ENCODE measurements at regions of chr6 and their contacts with region 1.

Region 1: GRCh38 chr6:105402939-105403935 is at the start of gene PREP:
- DNase-seq: peak; percentile 95
- total RNA-seq, gene PREP: 26.2 TPM

Region 2: DNA sequence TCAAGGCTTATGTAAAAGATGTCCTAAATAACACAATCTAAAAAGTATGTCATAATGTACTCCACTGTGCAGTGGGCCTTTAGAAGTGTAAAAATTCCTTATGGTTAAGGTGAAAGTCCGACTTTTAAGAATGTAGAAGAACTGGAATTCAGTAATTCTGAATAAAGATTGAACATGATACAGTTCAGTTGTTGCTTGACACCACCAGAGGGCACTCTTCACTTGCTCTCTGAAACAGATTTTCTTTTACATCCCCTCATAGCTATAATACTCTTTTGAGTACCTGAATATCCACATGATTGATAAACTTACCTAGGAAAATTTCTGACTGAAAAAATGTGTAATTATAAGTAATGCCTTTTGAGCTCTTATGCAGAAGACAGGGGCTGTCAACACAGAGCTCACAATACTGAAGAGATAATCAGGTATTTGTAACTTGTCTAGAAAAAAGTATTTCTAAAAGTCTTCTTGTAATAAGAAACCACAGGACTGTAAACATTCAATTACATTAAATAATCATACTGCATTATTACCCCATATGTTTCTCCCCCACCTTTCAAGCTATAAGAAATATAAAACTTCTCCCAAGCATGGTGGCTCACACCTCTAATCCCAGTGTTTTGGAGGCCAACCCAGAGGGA is 315.5 kb before region 1 on chr6:
- intact Hi-C with region 1: loop called (anchors 5 kb)
- DNase-seq: no peak

Region 3: GRCh38 chr6:105136431-105137350 is 266.5 kb before region 1 on chr6:
- intact Hi-C with region 1: loop called (anchors 5 kb)
- DNase-seq: peak; percentile 81

Region 4: GRCh38 chr6:105179244-105180065 is 223.8 kb before region 1 on chr6 and contains the start of gene POPDC3:
- intact Hi-C with region 1: loop called (anchors 2 kb)
- DNase-seq: no peak
- total RNA-seq, gene POPDC3: 35.1 TPM

Region 5: DNA sequence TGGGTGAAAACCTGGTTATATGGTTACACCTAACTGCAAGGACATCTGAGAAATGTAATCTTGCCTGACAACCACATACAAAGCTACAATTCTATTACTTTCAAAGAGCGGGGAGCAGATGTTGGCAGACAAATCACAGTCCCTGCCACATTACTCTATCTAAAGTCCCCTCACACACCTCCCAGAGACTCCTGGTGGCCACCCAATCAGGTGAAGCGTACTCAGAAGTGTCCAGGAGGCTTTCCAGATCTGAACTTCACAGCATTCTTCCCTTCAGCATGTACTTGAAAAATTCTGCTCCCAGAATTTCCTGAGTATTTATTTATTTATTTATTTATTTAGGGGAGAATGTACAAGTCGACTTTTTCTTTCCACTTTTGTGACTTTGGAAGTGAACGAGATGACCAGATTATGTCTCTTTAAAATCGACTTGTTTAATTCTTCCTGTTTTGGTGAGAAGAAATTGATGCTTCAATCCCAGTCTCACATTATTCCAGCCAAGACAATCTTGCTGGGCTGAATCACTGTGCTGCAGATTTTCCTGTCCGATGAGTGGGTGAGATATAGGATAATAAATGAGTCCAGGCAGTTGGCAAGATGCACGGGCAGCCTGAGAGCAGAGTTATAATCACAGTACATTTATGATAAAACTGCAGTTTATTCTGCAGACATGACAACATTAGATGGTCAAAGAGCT is 176.5 kb before region 1 on chr6:
- intact Hi-C with region 1: no loop called
- DNase-seq: no peak

Region 6: DNA sequence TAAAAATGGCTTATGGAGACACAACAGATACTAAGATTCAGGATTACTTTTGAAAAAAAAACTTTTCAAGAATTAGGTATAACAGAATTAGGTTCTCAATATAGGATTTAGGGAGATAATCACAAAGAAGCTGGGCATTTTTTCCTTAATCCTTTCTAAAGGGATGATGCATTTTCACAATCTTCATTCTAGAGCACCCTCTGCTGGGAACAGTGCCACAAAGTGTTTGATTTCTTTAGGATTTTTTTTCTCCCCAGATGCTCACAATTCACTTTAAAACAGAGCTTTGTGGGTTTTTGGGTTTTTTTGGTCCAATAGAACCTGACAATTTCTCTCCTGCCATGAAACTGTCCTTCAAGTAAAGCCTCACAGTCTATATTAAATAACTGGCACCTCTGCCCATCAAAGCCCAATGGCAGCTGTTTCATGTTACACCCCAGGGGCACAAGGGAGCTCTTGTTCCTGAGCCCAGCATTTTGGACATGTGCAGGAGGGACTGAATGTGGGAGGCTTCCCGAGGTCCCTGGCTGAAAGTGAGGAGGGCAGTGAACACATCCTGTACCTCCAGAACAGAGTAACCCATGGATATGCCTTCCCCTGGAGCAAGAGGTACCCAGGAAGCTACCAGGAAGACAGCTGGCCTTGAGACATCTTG is 40.0 kb before region 1 on chr6:
- intact Hi-C with region 1: loop called (anchors 5 kb)
- DNase-seq: no peak

Region 7: GRCh38 chr6:105587349-105588122 is 184.3 kb after region 1 on chr6:
- intact Hi-C with region 1: no loop called
- DNase-seq: no peak